MCF 10A (cell line): ENCODE measurements at regions of chr1 and their contacts with region 1.

Region 1: DNA sequence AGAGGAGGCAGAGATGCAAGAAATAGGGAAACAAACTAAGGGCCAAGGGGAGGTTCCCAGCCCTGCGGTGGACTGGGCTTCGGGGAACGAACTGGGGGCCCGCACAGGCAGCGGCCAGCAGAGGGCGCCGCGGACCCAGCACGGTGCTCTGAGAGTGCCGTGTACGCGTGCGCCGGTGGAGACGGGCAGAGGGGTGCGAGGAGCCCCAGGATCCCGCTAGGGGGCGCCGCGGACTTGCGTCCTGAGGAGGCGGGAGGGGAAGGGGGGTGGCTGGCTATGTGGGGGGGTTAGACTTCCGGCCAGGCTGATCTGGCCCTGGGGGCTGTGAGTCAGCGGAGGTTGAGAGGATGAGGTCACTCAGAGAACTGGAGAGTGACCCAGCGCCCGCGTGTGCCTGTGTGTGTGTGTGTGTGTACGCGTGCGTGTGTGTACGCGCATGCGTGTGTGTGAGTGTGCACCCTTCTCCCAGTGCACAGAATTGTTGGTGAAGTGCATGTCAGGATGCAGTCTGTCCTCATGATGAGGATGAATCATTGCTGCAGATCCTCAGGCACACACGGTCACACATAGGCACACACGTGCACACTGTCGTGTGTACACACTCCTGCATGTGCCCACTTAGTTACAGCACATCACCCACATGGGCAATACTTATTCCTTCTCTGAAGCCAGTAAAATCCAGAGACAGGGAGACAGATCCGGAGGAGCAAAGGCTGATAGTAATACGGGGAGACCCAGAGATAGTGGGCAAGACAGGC is 17.0 kb downstream of the NES start:
- DNase-seq: peak; percentile 99
- H3K4me3 Mint-ChIP-seq: peak overlapping the region; percentile 87
- H3K27ac Mint-ChIP-seq: peak overlapping the region; percentile 83
- H3K4me1 Mint-ChIP-seq: peaks cover 49% of the 10 kb centered on the region
- H3K27me3 Mint-ChIP-seq: no peaks in the 10 kb centered on the region
- CTCF ChIP-seq: peak; percentile 98

Region 2: DNA sequence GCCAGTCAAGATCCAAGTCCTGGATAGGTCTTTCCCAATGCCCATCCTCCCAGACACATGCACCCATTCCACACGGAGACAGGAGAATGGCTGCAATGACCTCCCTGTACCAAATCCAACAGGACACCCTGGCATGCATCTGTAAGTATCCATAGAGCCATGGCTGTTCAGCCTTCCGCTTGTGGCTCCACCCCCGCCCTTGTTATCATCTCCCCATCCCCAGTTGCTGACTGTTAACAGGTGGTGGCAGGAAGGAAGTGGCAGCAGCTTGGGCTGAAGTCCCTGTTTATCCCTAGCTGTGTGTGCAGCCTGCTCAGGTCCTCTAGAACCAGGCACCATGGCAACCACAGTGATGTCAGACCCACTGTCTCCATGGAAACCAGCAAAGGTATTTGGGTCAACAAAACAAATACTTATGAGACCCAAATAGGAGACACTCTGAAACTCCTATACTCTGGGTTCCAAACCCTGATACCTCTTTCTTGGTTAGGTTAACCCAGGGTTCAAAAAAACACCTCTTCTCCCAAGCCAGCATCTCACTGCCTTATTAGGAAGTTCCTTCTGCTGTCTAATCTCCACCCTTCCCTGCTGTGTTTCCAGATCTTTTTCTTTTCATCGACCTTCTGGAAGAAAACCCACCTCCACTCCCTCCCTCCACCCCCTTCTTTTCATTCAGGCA is 1705.0 kb before region 1 on chr1:
- CTCF ChIA-PET with region 1: no interaction called
- POLR2A ChIA-PET with region 1: no interaction called
- intact Hi-C with region 1: no loop called
- DNase-seq: no peak
- H3K4me3 Mint-ChIP-seq: peak overlapping the region; percentile 88
- H3K27ac Mint-ChIP-seq: peak overlapping the region; percentile 68
- H3K4me1 Mint-ChIP-seq: peaks cover 43% of the 10 kb centered on the region
- H3K27me3 Mint-ChIP-seq: no peaks in the 10 kb centered on the region
- CTCF ChIP-seq: no peak

Region 3: DNA sequence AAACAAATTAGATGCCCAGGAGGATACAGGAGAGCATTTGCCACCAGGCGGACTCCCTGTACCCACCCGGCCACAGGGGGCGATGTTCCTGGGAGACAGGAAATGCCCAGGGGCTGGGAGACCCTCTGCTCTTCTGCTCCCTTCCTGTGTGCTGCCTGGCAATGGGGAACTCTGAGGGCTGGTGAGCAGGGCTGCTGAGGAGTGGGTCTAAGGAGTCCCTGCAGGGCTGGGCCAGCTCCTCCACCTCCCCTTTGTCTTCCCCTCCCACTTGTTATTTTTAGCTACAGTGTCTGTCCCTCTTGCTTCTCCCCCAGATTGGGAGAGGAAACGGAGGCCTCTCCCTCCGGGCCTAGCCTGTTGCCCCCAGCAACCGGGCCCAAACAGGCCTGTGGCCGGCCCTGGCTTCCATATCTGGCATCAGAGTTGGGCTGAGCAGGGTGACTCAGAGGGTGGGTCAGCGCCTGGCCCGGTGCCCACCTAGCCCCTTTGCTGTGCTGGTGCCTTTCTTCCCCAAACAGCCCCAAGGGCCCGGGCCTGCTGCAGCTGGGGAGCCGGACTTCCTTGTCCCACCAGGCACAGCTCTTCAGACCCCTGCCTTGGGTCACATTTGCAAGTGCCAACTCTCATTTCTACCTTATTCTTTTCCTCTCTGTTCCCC is 534.0 kb before region 1 on chr1:
- CTCF ChIA-PET with region 1: no interaction called
- POLR2A ChIA-PET with region 1: no interaction called
- intact Hi-C with region 1: no loop called
- DNase-seq: peak; percentile 100
- H3K4me3 Mint-ChIP-seq: peak overlapping the region; percentile 60
- H3K27ac Mint-ChIP-seq: peak overlapping the region; percentile 96
- H3K4me1 Mint-ChIP-seq: peaks cover 85% of the 10 kb centered on the region
- H3K27me3 Mint-ChIP-seq: no peaks in the 10 kb centered on the region
- CTCF ChIP-seq: peak; percentile 68

Region 4: DNA sequence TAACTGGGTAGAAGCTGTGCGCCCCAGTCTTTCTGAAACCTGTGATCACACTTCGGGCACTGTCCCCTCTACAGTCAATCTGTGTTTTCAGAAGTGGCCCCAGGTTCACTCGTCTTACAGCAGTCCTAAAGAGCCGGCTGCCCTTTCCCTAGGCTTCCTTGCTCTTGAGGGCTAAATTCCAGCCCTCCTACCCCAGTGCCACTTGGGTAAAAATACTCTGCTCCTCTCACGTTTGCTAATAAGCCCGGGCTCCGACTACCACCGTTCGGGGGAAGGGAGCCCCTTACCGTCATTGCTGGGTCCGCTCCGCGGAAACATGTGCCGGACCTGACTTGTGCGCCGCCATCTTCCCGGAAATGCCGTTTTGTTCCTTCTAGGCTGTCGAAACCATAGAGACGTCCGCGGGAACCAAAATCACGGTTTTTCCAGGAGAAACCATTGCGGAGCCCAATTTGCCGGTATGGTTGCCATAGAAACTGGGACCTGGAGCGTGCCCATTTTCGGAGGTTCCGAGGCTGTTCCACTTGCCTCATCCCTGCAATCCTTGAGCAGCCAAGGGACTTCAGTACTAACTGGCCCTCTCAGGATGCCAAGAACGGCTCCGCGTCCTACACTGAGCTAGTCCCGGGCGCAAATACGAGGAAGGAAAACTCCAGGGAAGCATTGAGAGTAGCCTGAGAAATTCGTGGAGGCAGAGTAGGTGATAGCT is 58.9 kb before region 1 on chr1 and contains the start of gene GPATCH4:
- CTCF ChIA-PET with region 1: interaction called, 26 read pairs
- POLR2A ChIA-PET with region 1: interaction called, 4 read pairs
- intact Hi-C with region 1: no loop called
- DNase-seq: peak; percentile 94
- H3K4me3 Mint-ChIP-seq: peak within 1 kb of the TSS; percentile 86
- H3K27ac Mint-ChIP-seq: peak within 1 kb of the TSS; percentile 94
- H3K4me1 Mint-ChIP-seq: peaks cover 18% of the 10 kb centered on the region
- H3K27me3 Mint-ChIP-seq: no peaks in the 10 kb centered on the region
- CTCF ChIP-seq: no peak
- total RNA-seq, gene GPATCH4: 67.3 and 107 TPM in 2 replicates

Region 5: DNA sequence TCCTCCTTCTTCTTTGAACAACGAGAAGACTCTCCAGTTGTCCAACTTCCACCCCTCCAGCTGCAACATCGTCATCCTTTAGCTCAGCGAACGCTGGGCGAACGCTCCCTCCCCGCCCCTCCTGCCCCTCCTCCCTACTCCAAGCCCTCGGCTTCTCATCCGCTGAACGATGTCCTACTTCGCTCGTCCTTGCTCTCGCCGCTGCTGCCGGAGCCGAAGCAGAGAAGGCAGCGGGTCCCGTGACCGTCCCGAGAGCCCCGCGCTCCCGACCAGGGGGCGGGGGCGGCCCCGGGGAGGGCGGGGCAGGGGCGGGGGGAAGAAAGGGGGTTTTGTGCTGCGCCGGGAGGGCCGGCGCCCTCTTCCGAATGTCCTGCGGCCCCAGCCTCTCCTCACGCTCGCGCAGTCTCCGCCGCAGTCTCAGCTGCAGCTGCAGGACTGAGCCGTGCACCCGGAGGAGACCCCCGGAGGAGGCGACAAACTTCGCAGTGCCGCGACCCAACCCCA is 18.4 kb before region 1 on chr1 and contains the start of gene BCAN:
- CTCF ChIA-PET with region 1: interaction called, 56 read pairs
- POLR2A ChIA-PET with region 1: interaction called, 4 read pairs
- intact Hi-C with region 1: no loop called
- DNase-seq: no peak
- H3K4me3 Mint-ChIP-seq: no peak within 1 kb of the TSS
- H3K27ac Mint-ChIP-seq: no peak within 1 kb of the TSS
- H3K4me1 Mint-ChIP-seq: peaks cover 15% of the 10 kb centered on the region
- H3K27me3 Mint-ChIP-seq: peaks cover 36% of the 10 kb centered on the region
- CTCF ChIP-seq: no peak
- total RNA-seq, gene BCAN: 0.37 TPM in 1 of 2 replicates, not detected in the other

Region 6: DNA sequence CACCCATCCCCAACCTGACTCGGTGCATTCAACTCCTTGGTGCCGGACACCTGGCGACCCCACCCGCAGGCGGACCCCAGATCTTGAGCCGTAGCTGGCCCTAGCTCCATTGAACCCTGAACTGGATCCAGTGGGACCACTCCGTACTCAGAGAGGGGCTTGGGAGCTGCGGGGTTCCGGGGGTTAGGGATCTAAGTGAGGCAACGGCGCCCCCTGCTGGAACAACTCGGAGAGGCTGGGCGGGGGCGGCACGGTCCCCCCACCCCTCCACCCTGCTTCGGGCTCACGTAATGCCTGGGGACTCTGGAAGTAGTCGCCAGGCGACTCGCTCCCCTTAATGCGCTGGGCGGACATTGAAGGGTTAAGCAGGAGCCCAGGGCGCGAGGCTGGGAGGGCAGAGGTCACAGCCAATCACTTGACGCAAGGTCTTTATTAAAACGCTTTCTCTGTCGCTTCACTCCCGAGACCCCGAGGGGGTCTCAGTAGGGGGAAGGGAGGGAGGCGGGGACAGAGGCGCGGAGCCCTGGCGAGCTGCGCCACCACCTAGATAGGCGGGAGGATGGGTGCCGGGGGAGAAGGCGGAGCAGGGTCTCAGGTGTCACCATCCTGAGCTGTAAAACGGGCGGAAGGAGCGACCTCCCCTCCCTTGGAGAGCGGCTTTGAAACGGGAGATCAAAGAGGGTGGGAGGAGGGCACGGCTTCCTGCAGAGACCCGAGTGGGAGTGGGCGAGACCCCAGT is 45.9 kb after region 1 on chr1:
- CTCF ChIA-PET with region 1: interaction called, 23 read pairs
- POLR2A ChIA-PET with region 1: interaction called, 8 read pairs
- intact Hi-C with region 1: loop called (anchors 1 kb)
- DNase-seq: peak; percentile 57
- H3K4me3 Mint-ChIP-seq: peak overlapping the region; percentile 30
- H3K27ac Mint-ChIP-seq: no peak overlapping the region
- H3K4me1 Mint-ChIP-seq: peaks cover 38% of the 10 kb centered on the region
- H3K27me3 Mint-ChIP-seq: no peaks in the 10 kb centered on the region
- CTCF ChIP-seq: peak; percentile 99

Region 7: DNA sequence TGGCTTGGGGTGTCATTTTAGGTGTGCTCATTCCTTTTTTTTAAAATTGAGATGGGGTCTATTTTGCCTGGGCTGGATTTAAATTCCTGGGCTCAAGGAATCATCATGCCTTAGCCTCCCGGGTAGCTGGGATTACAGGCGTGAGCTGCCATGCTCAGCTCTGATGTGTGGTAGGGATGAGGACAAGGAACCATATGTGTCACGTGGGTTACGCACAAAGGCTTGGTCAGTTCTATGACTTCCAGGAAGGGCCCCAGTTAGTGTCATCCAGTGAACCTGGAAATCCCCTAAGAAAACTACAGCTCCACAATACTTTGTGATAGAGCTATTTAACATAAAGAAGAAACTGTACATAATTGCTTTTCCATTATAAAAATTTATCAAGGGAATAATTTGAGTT is 61.4 kb after region 1 on chr1:
- CTCF ChIA-PET with region 1: interaction called, 127 read pairs
- POLR2A ChIA-PET with region 1: interaction called, 58 read pairs
- intact Hi-C with region 1: loop called (anchors 1 kb)
- DNase-seq: no peak
- H3K4me3 Mint-ChIP-seq: no peak overlapping the region
- H3K27ac Mint-ChIP-seq: peak overlapping the region; percentile 54
- H3K4me1 Mint-ChIP-seq: peaks cover 11% of the 10 kb centered on the region
- H3K27me3 Mint-ChIP-seq: no peaks in the 10 kb centered on the region
- CTCF ChIP-seq: no peak

Region 8: GRCh38 chr1:156751758-156752757 is 91.9 kb after region 1 on chr1:
- CTCF ChIA-PET with region 1: interaction called, 8 read pairs
- POLR2A ChIA-PET with region 1: interaction called, 12 read pairs
- intact Hi-C with region 1: no loop called
- DNase-seq: peak; percentile 99
- H3K4me3 Mint-ChIP-seq: peak overlapping the region; percentile 79
- H3K27ac Mint-ChIP-seq: peak overlapping the region; percentile 99
- H3K4me1 Mint-ChIP-seq: peaks cover 37% of the 10 kb centered on the region
- H3K27me3 Mint-ChIP-seq: no peaks in the 10 kb centered on the region
- CTCF ChIP-seq: no peak

Region 9: DNA sequence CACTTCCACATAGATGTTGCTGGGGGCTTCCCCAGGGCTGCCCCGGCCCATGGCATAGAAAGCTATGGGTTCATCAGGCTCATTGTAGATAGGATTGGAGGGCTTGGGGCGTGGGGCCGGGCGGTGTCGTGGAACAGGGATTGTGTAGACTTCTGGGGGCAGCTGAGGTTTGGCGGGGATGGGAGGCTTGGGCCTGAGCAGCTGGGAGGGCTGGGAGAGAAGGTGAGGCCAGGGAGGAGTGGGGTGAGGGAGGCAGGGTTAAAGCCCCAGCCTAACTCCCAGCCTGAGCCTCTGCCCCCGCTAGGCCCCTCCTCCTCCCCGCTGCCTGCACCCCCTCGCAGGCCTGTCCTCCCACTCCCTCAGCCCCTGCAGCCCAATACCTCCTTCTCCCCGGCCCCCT is 149.1 kb after region 1 on chr1:
- CTCF ChIA-PET with region 1: no interaction called
- POLR2A ChIA-PET with region 1: no interaction called
- intact Hi-C with region 1: no loop called
- DNase-seq: no peak
- H3K4me3 Mint-ChIP-seq: no peak overlapping the region
- H3K27ac Mint-ChIP-seq: no peak overlapping the region
- H3K4me1 Mint-ChIP-seq: peaks cover 30% of the 10 kb centered on the region
- H3K27me3 Mint-ChIP-seq: no peaks in the 10 kb centered on the region
- CTCF ChIP-seq: no peak

Region 10: DNA sequence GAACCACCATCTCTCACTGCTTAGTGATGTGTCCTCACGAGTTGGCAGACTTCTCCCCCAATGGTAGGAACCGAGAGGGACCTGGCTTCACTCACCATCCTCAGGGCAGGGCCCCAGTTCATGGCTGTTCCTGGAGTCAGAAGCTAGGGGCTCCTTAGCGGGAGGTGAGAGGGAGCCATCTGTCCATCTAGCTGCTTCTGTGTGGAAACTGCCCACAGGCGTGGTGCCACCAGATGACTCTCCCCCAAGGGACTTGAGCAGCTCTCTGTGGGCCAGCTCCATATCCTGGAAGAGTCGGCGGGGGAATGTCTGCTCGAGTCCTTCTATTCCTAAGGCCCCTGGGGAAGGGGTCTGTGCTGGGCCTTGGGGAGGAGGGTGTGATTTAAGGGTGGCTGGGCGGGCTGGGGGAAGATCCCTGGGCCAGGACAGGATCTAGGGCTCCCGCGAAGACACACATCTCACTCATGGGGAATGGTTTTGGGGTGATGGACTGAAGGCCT is 276.6 kb after region 1 on chr1:
- CTCF ChIA-PET with region 1: no interaction called
- POLR2A ChIA-PET with region 1: no interaction called
- intact Hi-C with region 1: no loop called
- DNase-seq: no peak
- H3K4me3 Mint-ChIP-seq: no peak overlapping the region
- H3K27ac Mint-ChIP-seq: no peak overlapping the region
- H3K4me1 Mint-ChIP-seq: no peaks in the 10 kb centered on the region
- H3K27me3 Mint-ChIP-seq: no peaks in the 10 kb centered on the region
- CTCF ChIP-seq: no peak